ENCODE measurements at regions of chr1 and their contacts with region 1.

Region 1: GRCh38 chr1:39132505-39133339 is 71.8 kb upstream of the MACF1 start:
- DNase-seq: peak; percentile 53 to 91 (median 70)
- H3K4me3 ChIP-seq: no peak overlapping the region
- H3K27ac ChIP-seq: peak overlapping the region in 4 of 5 donors; percentile 34 to 72 (median 48)
- H3K4me1 ChIP-seq: peaks cover 29 to 56% of the 10 kb centered on the region in 2 donors
- H3K27me3 ChIP-seq: no peaks in the 10 kb centered on the region
- CTCF ChIP-seq: peak in 1 of 6 experiments; percentile 6
- POLR2A ChIP-seq: no peak

Region 2: DNA sequence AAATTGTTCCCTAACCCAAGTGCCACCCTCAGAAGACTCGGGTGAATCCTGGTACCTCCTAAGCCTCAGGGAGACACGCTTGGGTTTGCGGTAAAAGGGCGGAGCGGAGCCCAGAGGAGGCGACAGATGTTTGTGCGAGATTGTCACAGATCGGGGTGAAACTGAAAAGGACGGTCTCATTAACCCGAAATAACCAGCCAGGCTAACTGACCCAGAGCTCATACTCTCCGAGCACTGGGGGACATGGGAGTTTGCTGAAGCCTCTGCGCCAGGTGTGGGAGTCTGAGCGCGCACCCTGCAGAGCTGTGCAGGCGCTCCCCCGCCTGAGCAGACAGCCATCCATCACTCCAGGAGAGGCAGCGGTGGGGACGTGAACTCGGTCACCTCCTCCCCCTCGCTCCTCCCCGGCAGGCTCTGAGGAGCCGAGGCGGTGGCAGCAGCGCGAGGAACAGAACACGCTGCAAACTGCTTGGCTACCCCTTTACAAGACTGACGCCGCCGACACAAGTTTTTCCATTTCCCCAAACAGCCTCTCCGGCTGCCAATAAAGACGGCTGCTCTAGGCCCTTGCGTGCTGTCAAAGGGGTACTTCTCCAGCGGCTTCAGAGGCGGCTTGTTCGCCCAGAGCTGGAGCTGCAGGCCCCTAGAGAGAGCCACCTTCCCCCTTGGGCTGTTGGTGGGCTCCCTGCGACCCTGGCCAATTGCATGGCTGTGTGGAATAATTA is 316.7 kb before region 1 on chr1:
- intact Hi-C with region 1: no loop called
- DNase-seq: no peak
- H3K4me3 ChIP-seq: no peak overlapping the region
- H3K27ac ChIP-seq: no peak overlapping the region
- H3K4me1 ChIP-seq: peaks cover 0 to 11% of the 10 kb centered on the region in 2 donors
- H3K27me3 ChIP-seq: peaks cover 67% of the 10 kb centered on the region
- CTCF ChIP-seq: no peak
- POLR2A ChIP-seq: no peak

Region 3: DNA sequence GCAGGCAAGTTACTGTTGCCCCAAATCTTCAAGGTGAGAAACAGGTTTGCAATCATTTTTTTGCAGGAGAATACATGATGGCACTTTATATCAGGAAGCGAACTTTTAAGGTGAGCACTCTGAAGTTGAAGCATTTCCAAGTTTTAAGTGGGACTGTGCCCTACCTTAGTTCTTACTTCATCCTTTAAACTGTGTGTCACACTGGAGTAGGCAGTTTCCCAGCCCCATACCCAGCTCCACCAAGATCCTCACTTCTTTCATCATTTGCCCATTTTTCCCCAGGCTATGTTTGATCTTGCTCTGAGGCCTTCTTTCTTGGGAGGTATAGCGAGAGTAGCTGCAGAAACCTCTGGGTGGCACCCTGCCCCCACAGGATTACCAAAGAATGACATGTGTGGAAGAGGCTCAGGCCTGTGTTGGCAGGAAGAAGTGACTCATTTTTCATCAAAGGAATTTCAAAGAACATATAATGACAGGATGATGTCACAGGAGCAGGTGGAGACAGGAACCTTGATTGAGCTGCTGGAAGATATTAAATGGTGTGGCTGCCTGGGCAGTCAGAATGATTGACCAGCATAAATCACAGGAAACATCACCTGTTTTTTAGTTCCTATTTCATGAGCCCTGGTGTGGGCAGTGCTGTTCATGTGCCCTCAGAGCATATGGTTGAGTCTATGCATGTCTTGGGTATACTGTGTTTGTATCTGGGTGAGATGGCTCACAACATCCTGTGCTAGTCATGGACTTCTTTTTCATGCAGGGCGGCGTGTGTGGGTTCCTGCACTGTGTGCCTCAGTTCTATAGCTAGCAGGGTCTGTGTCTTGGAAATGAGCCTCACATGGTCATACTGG is 51.0 kb after region 1 on chr1:
- intact Hi-C with region 1: loop called in 1 of 2 experiments (anchors 10 kb)
- DNase-seq: peak; percentile 72 to 89 (median 83)
- H3K4me3 ChIP-seq: no peak overlapping the region
- H3K27ac ChIP-seq: peak overlapping the region in 4 of 5 donors; percentile 11 to 76 (median 54)
- H3K4me1 ChIP-seq: peaks cover 8 to 34% of the 10 kb centered on the region in 2 donors
- H3K27me3 ChIP-seq: no peaks in the 10 kb centered on the region
- CTCF ChIP-seq: peak; percentile 30 to 55 (median 51)
- POLR2A ChIP-seq: no peak

Measured in adrenal gland (tissue), 19 donors.